Heart left ventricle (tissue), 16 donors: ENCODE measurements at regions of chr15 and their contacts with region 1.

Region 1: DNA sequence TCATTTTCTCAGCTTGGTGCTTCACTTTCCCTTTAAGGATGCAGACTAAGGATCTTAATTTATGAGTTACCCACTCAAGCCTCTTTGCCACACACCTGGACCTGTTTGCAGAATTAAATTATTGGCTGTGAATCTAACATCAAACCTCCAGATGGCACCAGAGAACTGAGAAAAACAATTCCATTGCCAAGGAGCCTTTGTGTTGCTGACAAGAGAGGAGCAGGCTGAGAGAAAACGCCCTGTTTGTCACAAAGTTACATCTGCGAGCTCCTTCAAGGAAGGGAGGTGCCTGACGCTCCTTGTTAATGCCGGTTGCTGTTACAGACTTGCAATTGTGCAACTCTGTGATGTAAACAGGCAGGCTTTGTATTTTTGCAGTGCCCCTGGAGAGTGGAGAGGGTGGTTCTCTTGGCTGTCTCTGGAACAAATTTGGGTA is 36.3 kb upstream of the TMC3 start:
- DNase-seq: peak in 4 of 5 donors; percentile 18 to 66 (median 44)
- ATAC-seq: peak; percentile 73 to 92 (median 89)
- H3K4me3 ChIP-seq: no peak overlapping the region
- H3K27ac ChIP-seq: no peak overlapping the region
- H3K4me1 ChIP-seq: peaks cover 0 to 10% (median 2%) of the 10 kb centered on the region in 12 donors
- H3K27me3 ChIP-seq: no peaks in the 10 kb centered on the region
- CTCF ChIP-seq: peak; percentile 29 to 61 (median 52)
- POLR2A ChIP-seq: no peak

Region 2: DNA sequence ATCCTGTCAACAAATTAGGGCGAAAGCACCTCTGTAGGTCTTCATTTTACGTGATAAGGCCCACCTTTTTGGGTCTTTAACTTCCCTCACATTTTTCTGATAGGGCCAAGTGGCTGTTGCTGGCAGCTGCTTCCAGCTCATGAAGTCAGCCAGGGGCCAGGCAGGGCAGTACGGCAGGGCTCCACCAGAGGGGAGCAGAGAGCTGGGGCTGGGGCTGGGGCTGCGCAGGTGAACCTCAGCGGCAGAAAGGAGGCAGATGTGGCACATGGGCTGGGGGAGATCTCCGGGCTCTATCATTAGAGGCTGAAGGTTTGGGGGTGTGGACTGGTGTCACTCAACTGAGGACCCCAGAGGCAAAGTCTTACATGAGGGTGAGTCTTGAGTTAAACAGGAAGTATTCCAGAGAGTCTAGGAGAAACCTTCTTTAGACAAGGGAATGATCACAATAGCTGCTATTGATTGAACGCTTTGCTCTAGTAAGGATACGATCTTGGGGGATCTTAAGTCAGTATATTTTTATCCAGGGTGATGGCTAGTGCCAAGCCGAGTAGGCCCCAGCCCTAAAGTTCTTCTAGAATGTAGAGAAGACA is 698.2 kb after region 1 on chr15:
- intact Hi-C with region 1: loop called in 2 of 10 experiments (anchors 5 to 10 kb)
- DNase-seq: peak; percentile 21 to 84 (median 55)
- ATAC-seq: peak; percentile 85 to 96 (median 91)
- H3K4me3 ChIP-seq: no peak overlapping the region
- H3K27ac ChIP-seq: no peak overlapping the region
- H3K4me1 ChIP-seq: no peaks in the 10 kb centered on the region
- H3K27me3 ChIP-seq: no peaks in the 10 kb centered on the region
- CTCF ChIP-seq: peak; percentile 57 to 83 (median 70)
- POLR2A ChIP-seq: no peak